ENCODE measurements at regions of chr18 and their contacts with region 1.

Region 1: GRCh38 chr18:12820506-12820905 is 63.5 kb downstream of the PTPN2 start:
- DNase-seq: no peak
- H3K4me3 ChIP-seq: no peak overlapping the region
- H3K27ac ChIP-seq: no peak overlapping the region
- H3K4me1 ChIP-seq: no peaks in the 10 kb centered on the region
- H3K27me3 ChIP-seq: no peaks in the 10 kb centered on the region
- CTCF ChIP-seq: no peak

Region 2: DNA sequence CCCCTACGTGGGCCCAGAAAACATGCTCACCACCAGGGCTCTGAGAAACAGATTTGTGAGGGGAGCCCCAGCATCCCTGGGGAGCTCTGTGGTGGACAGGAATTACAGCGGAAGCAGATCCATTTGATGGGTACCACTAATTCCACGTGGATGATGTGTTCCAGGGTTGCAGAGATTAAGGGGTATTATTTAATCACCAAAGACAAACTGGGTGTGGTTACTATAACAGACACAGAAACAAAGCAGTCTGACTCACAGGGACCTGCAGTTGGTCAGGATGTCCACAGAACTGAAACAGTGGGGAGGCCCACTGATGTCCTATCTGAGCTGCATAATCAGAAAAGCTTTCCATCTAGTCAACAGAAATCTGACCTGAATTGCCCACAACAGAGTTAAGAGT is 51.9 kb before region 1 on chr18:
- intact Hi-C with region 1: loop called (anchors 10 kb)
- DNase-seq: no peak
- H3K4me3 ChIP-seq: no peak overlapping the region
- H3K27ac ChIP-seq: no peak overlapping the region
- H3K4me1 ChIP-seq: no peaks in the 10 kb centered on the region
- H3K27me3 ChIP-seq: no peaks in the 10 kb centered on the region
- CTCF ChIP-seq: no peak